Motor neuron (in vitro differentiated cells): ENCODE measurements at regions of chr9 and their contacts with region 1.

Region 1: GRCh38 chr9:3028535-3028934 is 184.6 kb upstream of the PUM3 start:
- ATAC-seq: peak in 7 of 8 experiments; percentile 33 to 89 (median 40)
- H3K4me3 ChIP-seq: no peak overlapping the region
- H3K27ac ChIP-seq: no peak overlapping the region
- H3K4me1 ChIP-seq: peaks cover 2 to 4% of the 10 kb centered on the region in 2 donors

Region 2: DNA sequence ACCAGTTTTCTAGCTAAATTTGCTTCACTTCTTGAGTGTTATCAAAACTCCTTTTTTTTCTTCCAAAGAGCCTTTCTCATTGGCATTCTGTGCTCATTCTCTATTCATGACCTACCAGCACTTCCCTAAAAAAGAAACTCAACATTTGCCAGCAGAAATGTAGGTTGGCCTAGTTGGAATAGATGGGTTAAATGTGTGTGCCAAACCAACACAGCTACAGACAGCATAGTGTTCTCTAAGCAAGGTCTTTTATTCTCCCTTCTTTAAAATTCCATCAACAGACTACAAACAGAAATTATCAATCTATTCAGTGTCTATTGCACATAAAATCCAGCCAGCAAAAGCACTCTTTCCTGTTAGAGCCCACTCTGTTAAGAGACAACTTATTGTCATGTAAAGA is 71.1 kb after region 1 on chr9:
- in situ Hi-C with region 1: loop called in 1 of 9 experiments (anchors 10 kb)
- ATAC-seq: peak in 2 of 8 experiments; percentile 36 to 46
- H3K4me3 ChIP-seq: no peak overlapping the region
- H3K27ac ChIP-seq: no peak overlapping the region
- H3K4me1 ChIP-seq: peaks cover 0 to 5% of the 10 kb centered on the region in 2 donors

Region 3: GRCh38 chr9:3136686-3137346 is 108.3 kb after region 1 on chr9:
- in situ Hi-C with region 1: loop called in 1 of 9 experiments (anchors 25 kb)
- ATAC-seq: no peak
- H3K4me3 ChIP-seq: no peak overlapping the region
- H3K27ac ChIP-seq: no peak overlapping the region
- H3K4me1 ChIP-seq: no peaks in the 10 kb centered on the region